Activated CD4-positive, alpha-beta memory T cell treated with anti-CD3 and anti-CD28 coated beads for 36 hours (primary cell): ENCODE measurements at regions of chr2 and their contacts with region 1.

Region 1: GRCh38 chr2:230335451-230335863 is 8.5 kb downstream of the SP140L start:
- DNase-seq: no peak
- H3K4me3 Mint-ChIP-seq: peak overlapping the region; percentile 64
- H3K27ac Mint-ChIP-seq: peak overlapping the region; percentile 89
- H3K4me1 Mint-ChIP-seq: peaks cover 63% of the 10 kb centered on the region
- H3K27me3 Mint-ChIP-seq: no peaks in the 10 kb centered on the region

Region 2: GRCh38 chr2:229768235-229768634 is 567.2 kb before region 1 on chr2:
- CTCF ChIA-PET with region 1: no interaction called
- POLR2A ChIA-PET with region 1: no interaction called
- intact Hi-C with region 1: no loop called
- DNase-seq: no peak
- H3K4me3 Mint-ChIP-seq: no peak overlapping the region
- H3K27ac Mint-ChIP-seq: no peak overlapping the region
- H3K4me1 Mint-ChIP-seq: no peaks in the 10 kb centered on the region
- H3K27me3 Mint-ChIP-seq: no peaks in the 10 kb centered on the region

Region 3: GRCh38 chr2:230347659-230348305 is 12.3 kb after region 1 on chr2:
- CTCF ChIA-PET with region 1: interaction called, 5 read pairs
- POLR2A ChIA-PET with region 1: interaction called, 3 read pairs
- intact Hi-C with region 1: loop called (anchors 1 kb)
- DNase-seq: peak; percentile 70
- H3K4me3 Mint-ChIP-seq: peak overlapping the region; percentile 47
- H3K27ac Mint-ChIP-seq: peak overlapping the region; percentile 92
- H3K4me1 Mint-ChIP-seq: peaks cover 80% of the 10 kb centered on the region
- H3K27me3 Mint-ChIP-seq: no peaks in the 10 kb centered on the region